ENCODE measurements at regions of chr13 and their contacts with region 1.

Region 1: GRCh38 chr13:24270639-24271141 is 38.7 kb upstream of the C1QTNF9 start:
- DNase-seq: peak; percentile 54
- H3K4me3 Mint-ChIP-seq: peak overlapping the region; percentile 88
- H3K27ac Mint-ChIP-seq: peak overlapping the region; percentile 93
- H3K4me1 Mint-ChIP-seq: peaks cover 82% of the 10 kb centered on the region
- H3K27me3 Mint-ChIP-seq: no peaks in the 10 kb centered on the region

Region 2: GRCh38 chr13:23375001-23375971 is 895.4 kb before region 1 on chr13:
- intact Hi-C with region 1: loop called (anchors 5 kb)
- DNase-seq: peak; percentile 92
- H3K4me3 Mint-ChIP-seq: peak overlapping the region; percentile 78
- H3K27ac Mint-ChIP-seq: peak overlapping the region; percentile 36
- H3K4me1 Mint-ChIP-seq: peaks cover 74% of the 10 kb centered on the region
- H3K27me3 Mint-ChIP-seq: peaks cover 4% of the 10 kb centered on the region

Region 3: DNA sequence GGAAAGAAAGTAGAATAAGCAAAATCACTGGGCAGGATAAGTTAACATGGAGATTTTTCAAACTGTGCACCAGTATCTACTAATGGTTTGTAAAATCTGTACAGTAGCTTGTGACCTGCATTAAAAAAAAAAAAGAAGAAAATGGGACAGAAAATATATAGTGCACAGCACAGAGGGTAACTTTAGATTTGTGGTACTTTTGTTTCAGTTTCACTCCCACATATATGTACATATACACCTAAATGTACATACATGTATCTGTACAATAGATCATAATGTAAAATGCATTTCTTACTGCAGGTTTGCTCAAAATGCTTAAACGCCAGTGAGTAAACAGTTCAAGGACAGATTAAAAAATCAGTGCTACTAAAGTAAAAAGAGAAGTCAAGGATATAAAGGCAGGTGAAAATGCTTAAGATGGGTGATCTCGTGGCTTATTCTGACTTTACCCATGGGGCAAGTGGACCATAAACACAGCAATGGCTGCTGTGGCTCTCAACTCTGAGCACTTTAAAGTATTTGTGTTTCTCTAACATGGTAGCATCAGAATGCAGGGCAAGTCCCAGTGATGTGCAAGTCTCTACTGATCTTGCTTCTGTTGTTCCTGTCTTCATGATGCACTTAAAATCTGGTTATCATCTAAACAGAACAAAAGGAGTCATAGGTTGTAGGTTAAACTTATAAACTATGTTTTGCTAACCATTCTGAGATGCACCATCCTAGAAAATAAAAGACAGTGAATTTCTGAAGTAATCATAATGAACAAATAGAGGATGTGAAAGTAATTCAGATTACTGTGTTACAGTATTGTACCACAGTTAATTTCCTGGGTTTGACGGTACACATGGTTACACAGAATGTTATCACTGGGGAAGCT is 493.8 kb before region 1 on chr13:
- intact Hi-C with region 1: no loop called
- DNase-seq: no peak
- H3K4me3 Mint-ChIP-seq: no peak overlapping the region
- H3K27ac Mint-ChIP-seq: no peak overlapping the region
- H3K4me1 Mint-ChIP-seq: peaks cover 11% of the 10 kb centered on the region
- H3K27me3 Mint-ChIP-seq: peaks cover 2% of the 10 kb centered on the region

Region 4: GRCh38 chr13:23822252-23822824 is 448.4 kb before region 1 on chr13:
- intact Hi-C with region 1: no loop called
- DNase-seq: no peak
- H3K4me3 Mint-ChIP-seq: no peak overlapping the region
- H3K27ac Mint-ChIP-seq: no peak overlapping the region
- H3K4me1 Mint-ChIP-seq: no peaks in the 10 kb centered on the region
- H3K27me3 Mint-ChIP-seq: no peaks in the 10 kb centered on the region

Region 5: GRCh38 chr13:23980160-23980551 is 290.5 kb before region 1 on chr13:
- intact Hi-C with region 1: loop called (anchors 5 kb)
- DNase-seq: peak; percentile 89
- H3K4me3 Mint-ChIP-seq: peak overlapping the region; percentile 90
- H3K27ac Mint-ChIP-seq: peak overlapping the region; percentile 79
- H3K4me1 Mint-ChIP-seq: peaks cover 18% of the 10 kb centered on the region
- H3K27me3 Mint-ChIP-seq: peaks cover 53% of the 10 kb centered on the region

Region 6: DNA sequence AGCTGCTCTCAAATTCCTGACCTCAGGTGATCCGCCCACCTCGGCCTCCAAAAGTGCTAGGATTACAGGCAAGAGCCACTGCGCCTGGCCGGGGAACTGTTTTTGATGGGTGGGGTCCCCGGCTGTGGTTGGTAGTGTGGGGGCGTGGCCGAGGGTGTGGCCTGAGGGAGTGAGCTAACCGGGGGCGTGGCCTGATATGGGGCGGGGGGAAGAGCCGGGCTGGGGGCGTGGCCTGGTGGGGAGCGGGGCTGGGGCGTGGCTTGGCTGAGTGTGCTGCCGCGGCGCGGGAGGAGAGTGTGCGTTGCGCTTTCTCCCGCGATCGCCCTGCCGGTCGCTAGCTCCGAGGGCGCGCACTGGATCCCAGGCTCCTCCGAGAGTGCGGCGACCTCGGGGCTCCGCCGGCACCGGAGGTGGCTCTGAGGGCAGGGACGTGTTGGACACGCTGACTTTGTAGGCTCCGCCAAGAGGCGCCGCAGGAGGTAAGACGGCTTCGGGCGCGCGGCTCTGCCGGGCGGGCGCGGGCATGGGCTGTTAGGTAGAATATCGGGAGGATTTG is 110.2 kb before region 1 on chr13 and contains the start of gene SPATA13:
- intact Hi-C with region 1: loop called (anchors 1 kb)
- DNase-seq: peak; percentile 86
- H3K4me3 Mint-ChIP-seq: peak within 1 kb of the TSS; percentile 92
- H3K27ac Mint-ChIP-seq: peak within 1 kb of the TSS; percentile 76
- H3K4me1 Mint-ChIP-seq: peaks cover 26% of the 10 kb centered on the region
- H3K27me3 Mint-ChIP-seq: peaks cover 7% of the 10 kb centered on the region
- total RNA-seq, gene SPATA13: 56.2 and 56.3 TPM in 2 replicates

Region 7: GRCh38 chr13:24254146-24254841 is 16.4 kb before region 1 on chr13:
- intact Hi-C with region 1: loop called (anchors 1 kb)
- DNase-seq: peak; percentile 47
- H3K4me3 Mint-ChIP-seq: peak overlapping the region; percentile 86
- H3K27ac Mint-ChIP-seq: peak overlapping the region; percentile 91
- H3K4me1 Mint-ChIP-seq: peaks cover 84% of the 10 kb centered on the region
- H3K27me3 Mint-ChIP-seq: no peaks in the 10 kb centered on the region

Region 8: GRCh38 chr13:24922745-24923591 is 652.3 kb after region 1 on chr13:
- intact Hi-C with region 1: loop called (anchors 5 kb)
- DNase-seq: peak; percentile 95
- H3K4me3 Mint-ChIP-seq: peak overlapping the region; percentile 95
- H3K27ac Mint-ChIP-seq: peak overlapping the region; percentile 92
- H3K4me1 Mint-ChIP-seq: peaks cover 14% of the 10 kb centered on the region
- H3K27me3 Mint-ChIP-seq: peaks cover 2% of the 10 kb centered on the region

Region 9: GRCh38 chr13:26051657-26052311 is 1781.1 kb after region 1 on chr13 and contains the start of gene SHISA2:
- intact Hi-C with region 1: loop called (anchors 10 kb)
- DNase-seq: peak; percentile 15
- H3K4me3 Mint-ChIP-seq: peak within 1 kb of the TSS; percentile 81
- H3K27ac Mint-ChIP-seq: peak within 1 kb of the TSS; percentile 72
- H3K4me1 Mint-ChIP-seq: peaks cover 35% of the 10 kb centered on the region
- H3K27me3 Mint-ChIP-seq: peaks cover 49% of the 10 kb centered on the region
- total RNA-seq, gene SHISA2: 9.4 and 9.5 TPM in 2 replicates